Aorta (tissue), 5 donors: ENCODE measurements at regions of chr16 and their contacts with region 1.

Region 1: DNA sequence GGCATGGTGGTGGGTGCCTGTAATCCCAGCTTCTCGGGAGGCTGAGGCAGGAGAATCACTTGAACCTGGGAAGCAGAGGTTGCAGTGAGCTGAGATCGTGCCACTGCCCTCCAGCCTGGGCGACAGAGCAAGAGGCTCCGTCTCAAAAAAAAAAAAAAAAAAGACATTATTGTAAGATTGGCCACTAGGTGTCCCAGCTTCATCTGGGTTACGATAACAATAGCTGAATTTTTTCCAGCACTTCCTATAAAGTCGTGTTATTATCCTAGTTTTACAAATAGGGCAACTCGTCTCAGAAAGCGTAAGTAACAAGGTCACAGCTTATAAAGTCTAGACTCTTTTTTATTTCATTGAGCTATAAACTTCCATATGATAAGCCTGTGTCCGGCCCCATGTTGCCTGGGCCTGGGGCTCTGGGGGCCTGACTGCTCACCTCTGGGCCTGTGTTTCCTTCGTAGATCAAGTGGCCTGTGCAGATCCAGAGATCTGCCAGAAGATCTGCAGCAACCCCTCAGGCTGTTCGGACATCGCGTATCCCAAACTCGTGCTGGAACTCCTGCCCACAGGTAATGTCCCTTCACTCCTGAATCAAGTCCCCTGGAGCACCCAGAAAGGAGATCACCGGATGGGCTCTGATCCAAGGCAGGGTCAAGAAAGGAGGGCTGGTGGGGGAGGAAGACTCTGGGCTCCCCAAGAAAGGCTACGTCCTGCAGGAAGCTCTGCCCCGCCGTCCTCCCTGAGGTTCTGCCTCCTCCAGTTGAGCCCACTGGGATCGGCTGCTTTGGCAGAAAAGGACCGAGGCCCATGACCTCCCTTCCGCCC is 60.6 kb downstream of the SLC5A11 start:
- DNase-seq: peak in 1 of 2 donors; percentile 38
- ATAC-seq: no peak
- H3K4me3 ChIP-seq: no peak overlapping the region
- H3K27ac ChIP-seq: no peak overlapping the region
- H3K4me1 ChIP-seq: no peaks in the 10 kb centered on the region
- H3K27me3 ChIP-seq: no peaks in the 10 kb centered on the region

Region 2: GRCh38 chr16:24844101-24845030 is 62.0 kb before region 1 on chr16:
- intact Hi-C with region 1: loop called in 1 of 2 experiments (anchors 10 kb)
- DNase-seq: no peak
- ATAC-seq: no peak
- H3K4me3 ChIP-seq: no peak overlapping the region
- H3K27ac ChIP-seq: no peak overlapping the region
- H3K4me1 ChIP-seq: no peaks in the 10 kb centered on the region
- H3K27me3 ChIP-seq: no peaks in the 10 kb centered on the region

Region 3: DNA sequence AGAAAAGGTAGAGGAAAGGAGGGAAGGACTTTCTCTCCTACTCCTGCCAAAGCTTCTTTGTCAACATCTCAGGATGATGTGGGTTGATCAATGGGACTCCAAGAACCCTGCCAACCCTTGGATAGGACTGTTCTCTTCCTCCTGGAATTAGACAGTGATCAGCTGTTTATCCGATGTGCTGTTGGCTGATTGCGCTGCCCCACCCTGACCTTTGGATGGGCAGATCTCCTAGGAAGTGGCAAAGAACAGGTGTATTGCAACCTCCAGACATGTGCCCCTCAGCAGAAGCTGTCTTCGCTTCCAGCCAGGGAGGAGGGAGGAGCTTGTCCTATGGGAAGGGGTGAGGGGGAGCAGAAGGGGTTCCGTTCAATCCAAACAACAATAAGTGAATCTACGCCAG is 30.2 kb before region 1 on chr16:
- intact Hi-C with region 1: no loop called
- DNase-seq: no peak
- ATAC-seq: no peak
- H3K4me3 ChIP-seq: no peak overlapping the region
- H3K27ac ChIP-seq: no peak overlapping the region
- H3K4me1 ChIP-seq: no peaks in the 10 kb centered on the region
- H3K27me3 ChIP-seq: no peaks in the 10 kb centered on the region

Region 4: GRCh38 chr16:24935319-24936057 is 29.1 kb after region 1 on chr16:
- intact Hi-C with region 1: no loop called
- DNase-seq: no peak
- ATAC-seq: no peak
- H3K4me3 ChIP-seq: no peak overlapping the region
- H3K27ac ChIP-seq: no peak overlapping the region
- H3K4me1 ChIP-seq: no peaks in the 10 kb centered on the region
- H3K27me3 ChIP-seq: no peaks in the 10 kb centered on the region